Activated naive CD4-positive, alpha-beta T cell treated with anti-CD3 and anti-CD28 coated beads, Interleukin-2, amount 10 ng/mL, durations not matched to agents 7 days and 5 days (primary cell): ENCODE measurements at regions of chr22 and their contacts with region 1.

Region 1: DNA sequence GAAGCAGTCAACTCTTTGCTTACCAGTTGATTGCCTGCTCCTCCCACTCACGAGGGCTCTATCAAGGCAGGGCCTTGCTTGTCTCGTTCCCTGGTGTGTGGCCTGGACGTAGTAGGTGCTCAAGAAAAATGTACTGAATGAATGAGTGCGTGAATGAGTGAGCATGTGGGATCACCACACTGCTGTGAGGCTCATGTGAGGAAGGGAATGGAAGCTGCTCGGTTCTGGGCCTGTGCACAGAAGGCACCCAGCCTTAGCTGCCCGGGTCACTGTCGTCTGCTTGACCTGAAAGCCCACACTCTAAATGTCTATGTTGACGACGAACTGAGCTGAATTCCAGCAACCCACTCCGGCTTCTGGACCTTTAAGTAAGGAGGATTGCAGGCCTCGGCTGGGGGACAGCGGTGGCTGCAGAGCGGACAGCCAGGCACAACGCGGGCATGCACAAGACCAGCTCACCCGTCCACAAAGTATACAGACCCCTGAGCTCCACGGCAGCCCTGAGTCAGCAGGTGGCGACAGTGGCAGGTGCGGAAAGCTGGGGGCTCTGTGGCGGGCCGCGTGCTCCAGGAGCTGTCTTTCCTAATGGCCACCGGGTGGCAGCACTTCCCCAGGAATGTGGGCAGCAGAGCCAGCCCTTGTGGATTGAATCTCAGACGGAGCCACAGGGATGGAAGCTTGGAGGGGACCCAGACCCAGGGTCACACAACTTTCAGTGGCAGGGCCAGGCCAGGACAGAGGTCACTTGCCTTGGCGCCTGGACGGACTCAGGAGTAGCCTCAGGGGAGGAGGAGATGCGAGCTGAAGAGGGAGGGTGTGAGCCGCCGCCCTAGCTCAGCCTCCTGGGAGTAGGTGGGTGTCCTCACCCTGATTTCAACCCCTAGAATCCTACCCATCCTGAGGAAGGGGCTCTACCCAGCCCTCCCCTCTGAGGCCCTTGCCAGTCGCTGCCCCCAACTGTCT is 5.0 kb upstream of the PICK1 start:
- DNase-seq: peak; percentile 83
- H3K4me3 Mint-ChIP-seq: no peak overlapping the region
- H3K27ac Mint-ChIP-seq: no peak overlapping the region
- H3K4me1 Mint-ChIP-seq: peaks cover 11% of the 10 kb centered on the region
- H3K27me3 Mint-ChIP-seq: peaks cover 53% of the 10 kb centered on the region

Region 2: DNA sequence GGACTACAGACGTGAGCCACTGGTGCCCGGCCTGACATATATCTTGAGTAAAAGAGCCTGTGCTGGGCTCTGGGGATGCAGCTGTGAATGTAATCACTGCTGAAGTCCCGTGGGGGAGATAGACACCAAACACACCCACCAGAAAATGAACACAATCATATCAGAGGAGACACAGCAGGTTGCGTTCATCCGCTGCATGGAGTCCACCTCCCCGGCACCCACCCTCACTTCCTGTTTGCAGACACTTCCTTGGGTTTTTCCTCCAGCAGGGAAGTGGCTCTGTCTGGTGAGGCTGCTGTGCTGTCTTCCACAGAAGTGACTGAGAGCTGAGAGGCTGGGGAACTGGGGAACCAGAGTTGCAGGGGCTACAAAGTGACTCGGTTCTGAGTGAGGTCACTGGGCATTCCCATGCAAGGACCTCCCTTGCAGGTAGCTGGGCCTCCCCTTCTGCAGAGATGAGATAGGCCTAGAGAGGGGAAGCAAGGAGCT is 138.9 kb before region 1 on chr22:
- CTCF ChIA-PET with region 1: no interaction called
- DNase-seq: no peak
- H3K4me3 Mint-ChIP-seq: no peak overlapping the region
- H3K27ac Mint-ChIP-seq: peak overlapping the region; percentile 55
- H3K4me1 Mint-ChIP-seq: peaks cover 34% of the 10 kb centered on the region
- H3K27me3 Mint-ChIP-seq: no peaks in the 10 kb centered on the region

Region 3: GRCh38 chr22:38041760-38042487 is 10.3 kb before region 1 on chr22:
- CTCF ChIA-PET with region 1: interaction called, 10 read pairs
- DNase-seq: no peak
- H3K4me3 Mint-ChIP-seq: no peak overlapping the region
- H3K27ac Mint-ChIP-seq: no peak overlapping the region
- H3K4me1 Mint-ChIP-seq: no peaks in the 10 kb centered on the region
- H3K27me3 Mint-ChIP-seq: peaks cover 19% of the 10 kb centered on the region

Region 4: DNA sequence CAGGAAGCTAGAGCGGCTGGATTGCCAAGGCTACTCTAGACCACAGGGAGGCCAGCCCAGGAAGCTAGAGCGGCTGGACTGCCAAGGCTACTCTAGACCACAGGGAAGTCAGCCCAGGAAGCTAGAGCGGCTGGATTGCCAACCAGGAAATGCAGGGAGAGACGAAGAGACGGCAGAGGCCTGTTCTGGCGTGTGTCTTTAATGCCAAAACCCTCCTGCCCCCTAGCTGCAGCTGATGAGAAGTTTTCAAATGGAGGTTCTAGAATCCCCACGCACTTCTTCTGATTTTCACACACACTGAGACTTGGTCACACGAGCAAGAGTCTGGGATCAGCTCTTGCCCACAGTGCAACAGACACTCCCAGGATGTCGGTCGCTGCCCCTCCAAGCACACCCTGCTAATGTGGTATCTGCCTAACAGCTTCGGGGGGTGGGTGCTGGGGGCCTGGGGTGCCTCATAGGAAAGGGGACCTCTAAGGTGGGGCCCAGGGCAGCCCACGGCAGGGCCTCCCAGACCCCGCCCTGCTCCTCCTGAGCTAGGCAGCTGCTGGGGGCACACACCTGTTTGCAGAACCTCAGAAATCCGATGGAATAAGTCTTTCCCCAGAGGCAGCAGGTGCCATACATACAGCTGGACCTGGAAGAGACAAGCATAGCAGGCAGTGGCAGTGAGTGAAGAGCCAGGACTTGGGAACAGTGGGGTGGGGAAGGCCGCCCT is 178.1 kb after region 1 on chr22:
- CTCF ChIA-PET with region 1: interaction called, 30 read pairs
- DNase-seq: peak; percentile 63
- H3K4me3 Mint-ChIP-seq: no peak overlapping the region
- H3K27ac Mint-ChIP-seq: no peak overlapping the region
- H3K4me1 Mint-ChIP-seq: peaks cover 12% of the 10 kb centered on the region
- H3K27me3 Mint-ChIP-seq: no peaks in the 10 kb centered on the region

Region 5: GRCh38 chr22:38347897-38348750 is 295.9 kb after region 1 on chr22:
- CTCF ChIA-PET with region 1: interaction called, 12 read pairs
- DNase-seq: no peak
- H3K4me3 Mint-ChIP-seq: no peak overlapping the region
- H3K27ac Mint-ChIP-seq: no peak overlapping the region
- H3K4me1 Mint-ChIP-seq: no peaks in the 10 kb centered on the region
- H3K27me3 Mint-ChIP-seq: peaks cover 28% of the 10 kb centered on the region

Region 6: DNA sequence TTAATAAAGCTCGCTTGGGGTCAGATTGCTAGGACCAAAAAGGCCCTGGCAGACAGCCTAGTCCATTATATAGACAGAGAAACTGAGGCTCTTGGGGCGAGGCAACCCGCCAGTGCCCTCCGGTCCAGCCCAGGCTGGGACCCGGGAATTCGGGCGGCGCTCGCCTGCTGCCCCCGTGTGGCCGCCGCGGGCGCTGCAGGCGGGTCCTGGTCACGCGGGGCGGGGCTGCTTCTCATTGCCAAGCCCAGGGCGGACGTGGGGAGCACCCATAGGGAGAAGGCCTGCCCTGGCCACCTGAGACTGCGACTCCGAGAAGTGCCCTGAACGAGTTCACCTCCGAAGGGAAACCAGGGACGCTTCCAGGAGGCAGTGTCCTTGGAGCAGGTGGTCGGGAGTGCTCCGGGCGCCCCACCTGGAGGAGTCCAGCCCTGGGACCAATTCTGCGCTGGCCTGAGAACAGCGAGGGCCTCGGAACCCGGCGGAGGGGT is 301.0 kb after region 1 on chr22:
- CTCF ChIA-PET with region 1: interaction called, 12 read pairs
- DNase-seq: peak; percentile 70
- H3K4me3 Mint-ChIP-seq: no peak overlapping the region
- H3K27ac Mint-ChIP-seq: no peak overlapping the region
- H3K4me1 Mint-ChIP-seq: no peaks in the 10 kb centered on the region
- H3K27me3 Mint-ChIP-seq: peaks cover 13% of the 10 kb centered on the region

Region 7: GRCh38 chr22:38569972-38570778 is 518.0 kb after region 1 on chr22 and contains the start of gene DMC1:
- CTCF ChIA-PET with region 1: interaction called, 12 read pairs
- DNase-seq: peak; percentile 99
- H3K4me3 Mint-ChIP-seq: peak within 1 kb of the TSS; percentile 81
- H3K27ac Mint-ChIP-seq: peak within 1 kb of the TSS; percentile 95
- H3K4me1 Mint-ChIP-seq: peaks cover 22% of the 10 kb centered on the region
- H3K27me3 Mint-ChIP-seq: peaks cover 5% of the 10 kb centered on the region